A549 (cell line): ENCODE measurements at regions of chr21 and their contacts with region 1.

Region 1: GRCh38 chr21:40829308-40830175 is 17.4 kb downstream of the DSCAM start:
- DNase-seq: no peak
- ATAC-seq: no peak
- H3K4me3 ChIP-seq: no peak overlapping the region
- H3K27ac ChIP-seq: no peak overlapping the region
- H3K4me1 ChIP-seq: no peaks in the 10 kb centered on the region
- CTCF ChIP-seq: no peak
- EP300 ChIP-seq: no peak
- POLR2A ChIP-seq: no peak
- RAD21 ChIP-seq: no peak

Region 2: GRCh38 chr21:40602080-40602479 is 227.5 kb before region 1 on chr21:
- CTCF ChIA-PET with region 1: no interaction called
- POLR2A ChIA-PET with region 1: interaction called, 12 read pairs
- DNase-seq: no peak
- ATAC-seq: no peak
- H3K4me3 ChIP-seq: no peak overlapping the region
- H3K27ac ChIP-seq: no peak overlapping the region
- H3K4me1 ChIP-seq: no peaks in the 10 kb centered on the region
- CTCF ChIP-seq: no peak
- EP300 ChIP-seq: no peak
- POLR2A ChIP-seq: no peak
- RAD21 ChIP-seq: no peak

Region 3: GRCh38 chr21:40964691-40965090 is 135.1 kb after region 1 on chr21:
- CTCF ChIA-PET with region 1: no interaction called
- POLR2A ChIA-PET with region 1: no interaction called
- DNase-seq: no peak
- ATAC-seq: no peak
- H3K4me3 ChIP-seq: no peak overlapping the region
- H3K27ac ChIP-seq: no peak overlapping the region
- H3K4me1 ChIP-seq: no peaks in the 10 kb centered on the region
- CTCF ChIP-seq: no peak
- EP300 ChIP-seq: no peak
- POLR2A ChIP-seq: no peak
- RAD21 ChIP-seq: no peak